CD8-positive, alpha-beta memory T cell (primary cell): ENCODE measurements at regions of chr15 and their contacts with region 1.

Region 1: DNA sequence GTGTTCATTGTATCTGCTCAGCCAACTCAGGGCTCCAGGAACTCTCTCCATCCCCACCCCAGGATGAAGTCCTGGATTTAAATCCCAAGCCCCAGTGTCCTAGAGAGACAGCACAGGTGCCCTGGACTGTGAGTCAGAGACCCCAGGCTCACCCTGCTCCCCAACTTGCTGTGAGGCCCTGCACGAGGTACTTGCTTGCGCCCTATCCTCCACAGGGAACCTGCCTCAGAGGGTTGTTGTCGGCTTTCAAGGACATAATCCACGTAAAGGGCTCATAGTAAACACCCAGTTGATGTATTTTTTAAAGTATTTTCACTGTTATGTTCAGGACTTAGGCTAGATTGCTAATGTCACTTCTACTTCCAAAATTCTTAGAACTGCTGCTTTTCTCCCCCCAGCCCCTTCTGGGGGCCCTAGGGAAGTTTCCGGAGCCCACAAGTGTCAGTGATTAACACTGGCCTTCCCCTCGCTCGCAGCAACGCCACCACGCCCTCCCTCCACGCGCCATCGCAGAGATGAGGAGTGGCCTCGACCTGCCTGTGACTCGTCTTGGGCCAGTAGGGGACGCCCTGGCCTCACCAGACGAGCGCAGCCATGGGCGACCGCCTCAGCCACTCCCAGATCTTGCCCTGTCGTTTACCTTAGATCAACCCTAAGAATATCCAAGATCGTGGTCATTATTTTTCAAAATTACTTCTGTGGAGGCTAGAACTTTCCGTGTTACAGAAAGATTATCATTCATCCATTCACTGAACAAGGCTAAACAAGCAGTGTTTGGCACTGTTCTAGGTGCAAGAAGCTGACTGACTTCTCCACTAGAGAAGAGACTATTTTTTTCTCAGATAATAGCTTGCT is 6.0 kb upstream of the SRP14 start:
- DNase-seq: peak; percentile 67 to 86 (median 72)
- H3K4me3 ChIP-seq: peak overlapping the region; percentile 9
- H3K4me3 Mint-ChIP-seq: peak overlapping the region in 6 of 7 donors; percentile 43 to 78 (median 63)
- H3K27ac ChIP-seq: no peak overlapping the region
- H3K27ac Mint-ChIP-seq: peak overlapping the region; percentile 21 to 83 (median 55)
- H3K4me1 ChIP-seq: peaks cover 57% of the 10 kb centered on the region
- H3K4me1 Mint-ChIP-seq: peaks cover 50 to 64% (median 60%) of the 10 kb centered on the region in 3 donors
- H3K27me3 ChIP-seq: no peaks in the 10 kb centered on the region
- H3K27me3 Mint-ChIP-seq: no peaks in the 10 kb centered on the region

Region 2: DNA sequence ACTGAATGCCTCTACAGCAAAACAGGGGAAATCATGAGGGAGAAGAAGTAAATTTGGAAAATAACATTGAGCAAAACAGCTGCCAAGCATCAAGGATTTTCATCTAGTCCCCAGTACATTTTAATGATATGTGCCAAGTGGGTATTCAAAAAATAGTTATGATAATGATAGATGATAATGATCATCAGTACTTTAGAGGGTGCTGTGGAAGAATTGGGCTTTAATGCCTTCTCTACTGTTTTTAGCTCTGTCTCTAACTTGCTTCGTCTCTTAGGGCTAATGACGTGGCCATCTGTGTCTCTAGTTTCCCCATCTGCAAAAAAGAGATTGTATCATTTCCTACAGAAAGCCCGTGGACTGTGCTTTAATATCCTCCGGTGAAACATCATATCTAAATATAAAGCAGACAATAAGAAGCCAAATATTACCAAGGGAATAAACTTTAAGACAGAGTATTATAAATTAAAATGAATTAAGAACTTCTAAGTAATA is 252.1 kb before region 1 on chr15:
- CTCF ChIA-PET with region 1: no interaction called
- POLR2A ChIA-PET with region 1: no interaction called
- DNase-seq: no peak
- H3K4me3 ChIP-seq: no peak overlapping the region
- H3K4me3 Mint-ChIP-seq: no peak overlapping the region
- H3K27ac ChIP-seq: no peak overlapping the region
- H3K27ac Mint-ChIP-seq: no peak overlapping the region
- H3K4me1 ChIP-seq: no peaks in the 10 kb centered on the region
- H3K4me1 Mint-ChIP-seq: peaks cover 0 to 3% (median 1%) of the 10 kb centered on the region in 3 donors
- H3K27me3 ChIP-seq: no peaks in the 10 kb centered on the region
- H3K27me3 Mint-ChIP-seq: peaks cover 17 to 28% of the 10 kb centered on the region in 2 donors

Region 3: GRCh38 chr15:40063563-40064011 is 18.6 kb after region 1 on chr15:
- CTCF ChIA-PET with region 1: interaction called, 14 read pairs
- POLR2A ChIA-PET with region 1: no interaction called
- DNase-seq: no peak
- H3K4me3 ChIP-seq: no peak overlapping the region
- H3K4me3 Mint-ChIP-seq: no peak overlapping the region
- H3K27ac ChIP-seq: no peak overlapping the region
- H3K27ac Mint-ChIP-seq: no peak overlapping the region
- H3K4me1 ChIP-seq: peaks cover 6% of the 10 kb centered on the region
- H3K4me1 Mint-ChIP-seq: peaks cover 6 to 12% (median 9%) of the 10 kb centered on the region in 3 donors
- H3K27me3 ChIP-seq: no peaks in the 10 kb centered on the region
- H3K27me3 Mint-ChIP-seq: no peaks in the 10 kb centered on the region

Region 4: DNA sequence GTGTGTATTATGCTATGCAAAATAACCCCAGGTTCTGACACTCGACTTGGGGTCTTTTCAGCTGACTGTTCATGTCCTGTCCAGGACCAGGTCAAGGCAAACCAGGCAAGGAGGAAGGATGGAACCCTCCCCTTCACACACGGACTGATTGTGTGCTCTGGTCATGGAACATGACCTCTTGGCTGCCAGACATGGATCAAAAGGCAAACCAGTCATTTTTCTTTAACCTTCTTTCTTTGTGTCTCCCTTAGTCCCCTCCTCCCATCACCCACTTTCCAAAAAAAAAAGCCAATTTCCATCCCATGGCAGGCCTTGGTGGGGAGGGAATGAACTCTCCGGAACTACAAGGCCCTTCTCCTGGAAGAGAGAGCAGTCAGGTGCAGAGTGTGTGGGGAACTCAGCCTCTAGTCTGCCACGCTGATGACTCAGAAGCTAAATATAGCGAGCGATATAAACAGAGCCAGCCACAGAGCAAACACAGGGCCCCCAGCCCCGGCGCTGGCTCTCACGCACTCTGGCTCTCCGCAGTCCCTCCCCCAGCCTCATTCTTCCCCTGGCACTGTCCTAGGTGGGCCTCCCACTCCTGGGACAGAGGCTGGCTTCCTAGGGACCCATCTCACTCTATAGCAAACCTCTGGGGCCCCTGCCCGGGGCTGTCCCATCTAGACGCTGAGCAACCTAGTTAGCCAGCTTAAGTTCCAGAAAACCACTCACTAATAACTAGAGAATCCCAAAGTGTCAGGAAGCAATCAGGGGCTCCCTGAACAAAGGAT is 53.7 kb after region 1 on chr15:
- CTCF ChIA-PET with region 1: interaction called, 140 read pairs
- POLR2A ChIA-PET with region 1: interaction called, 4 read pairs
- DNase-seq: peak; percentile 13 to 87 (median 38)
- H3K4me3 ChIP-seq: peak overlapping the region; percentile 42
- H3K4me3 Mint-ChIP-seq: peak overlapping the region in 6 of 7 donors; percentile 51 to 82 (median 69)
- H3K27ac ChIP-seq: peak overlapping the region; percentile 43
- H3K27ac Mint-ChIP-seq: peak overlapping the region; percentile 56 to 94 (median 86)
- H3K4me1 ChIP-seq: peaks cover 45% of the 10 kb centered on the region
- H3K4me1 Mint-ChIP-seq: peaks cover 36 to 84% (median 41%) of the 10 kb centered on the region in 3 donors
- H3K27me3 ChIP-seq: no peaks in the 10 kb centered on the region
- H3K27me3 Mint-ChIP-seq: no peaks in the 10 kb centered on the region

Region 5: GRCh38 chr15:40155270-40155910 is 110.4 kb after region 1 on chr15:
- CTCF ChIA-PET with region 1: no interaction called
- POLR2A ChIA-PET with region 1: no interaction called
- DNase-seq: no peak
- H3K4me3 ChIP-seq: no peak overlapping the region
- H3K4me3 Mint-ChIP-seq: no peak overlapping the region
- H3K27ac ChIP-seq: no peak overlapping the region
- H3K27ac Mint-ChIP-seq: peak overlapping the region in 1 of 8 donors; percentile 96
- H3K4me1 ChIP-seq: peaks cover 3% of the 10 kb centered on the region
- H3K4me1 Mint-ChIP-seq: no peaks in the 10 kb centered on the region
- H3K27me3 ChIP-seq: no peaks in the 10 kb centered on the region
- H3K27me3 Mint-ChIP-seq: peaks cover 0 to 4% of the 10 kb centered on the region in 2 donors

Region 6: GRCh38 chr15:40618023-40618422 is 573.1 kb after region 1 on chr15:
- CTCF ChIA-PET with region 1: no interaction called
- POLR2A ChIA-PET with region 1: no interaction called
- DNase-seq: no peak
- H3K4me3 ChIP-seq: no peak overlapping the region
- H3K4me3 Mint-ChIP-seq: no peak overlapping the region
- H3K27ac ChIP-seq: no peak overlapping the region
- H3K27ac Mint-ChIP-seq: no peak overlapping the region
- H3K4me1 ChIP-seq: no peaks in the 10 kb centered on the region
- H3K4me1 Mint-ChIP-seq: no peaks in the 10 kb centered on the region
- H3K27me3 ChIP-seq: no peaks in the 10 kb centered on the region
- H3K27me3 Mint-ChIP-seq: no peaks in the 10 kb centered on the region